ENCODE measurements at regions of chr1 and their contacts with region 1.

Region 1: GRCh38 chr1:160675641-160676410 is 29.0 kb upstream of the SLAMF1 start:
- DNase-seq: peak; percentile 70 to 72
- H3K4me3 ChIP-seq: no peak overlapping the region
- H3K4me3 Mint-ChIP-seq: no peak overlapping the region
- H3K27ac Mint-ChIP-seq: no peak overlapping the region
- H3K4me1 ChIP-seq: no peaks in the 10 kb centered on the region
- H3K4me1 Mint-ChIP-seq: no peaks in the 10 kb centered on the region
- H3K27me3 ChIP-seq: no peaks in the 10 kb centered on the region
- H3K27me3 Mint-ChIP-seq: no peaks in the 10 kb centered on the region
- CTCF ChIP-seq: peak; percentile 68 to 83

Region 2: DNA sequence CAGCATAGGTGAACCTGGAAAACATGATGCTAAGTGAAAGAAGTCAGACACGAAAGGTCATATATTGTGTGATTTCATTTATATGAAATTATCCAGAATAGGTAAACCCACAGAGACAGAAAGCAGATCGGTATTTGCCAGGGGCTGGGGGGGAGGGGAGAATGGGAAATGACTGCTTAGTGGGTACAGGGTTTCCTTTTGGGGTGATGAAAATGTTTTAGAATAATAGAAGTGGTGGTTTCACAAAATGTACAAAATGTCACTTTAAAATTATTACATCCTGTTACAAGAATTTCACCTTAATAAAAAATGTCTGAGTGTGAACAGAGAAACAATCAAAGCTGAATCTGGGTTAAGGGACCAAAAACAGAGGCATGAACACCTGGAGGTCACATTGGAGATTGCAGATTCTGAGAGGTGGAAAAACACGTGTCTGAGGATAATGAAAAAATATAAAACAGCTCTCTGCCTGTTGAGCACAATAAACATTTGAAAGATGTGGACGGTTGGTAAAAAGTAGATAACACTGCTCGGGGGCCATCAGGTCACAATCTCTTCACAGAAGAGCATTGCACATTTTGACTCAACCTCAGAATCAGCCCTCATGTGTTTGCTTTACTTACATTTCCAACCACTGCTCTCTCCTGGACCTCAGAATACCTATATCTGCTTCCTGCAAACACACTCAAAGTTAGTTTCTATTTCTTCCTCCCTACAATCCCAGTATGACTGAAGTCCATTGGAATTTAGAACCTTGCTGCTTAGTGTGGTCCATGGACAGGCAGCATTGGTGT is 156.0 kb before region 1 on chr1:
- CTCF ChIA-PET with region 1: no interaction called
- POLR2A ChIA-PET with region 1: no interaction called
- intact Hi-C with region 1: no loop called
- DNase-seq: no peak
- H3K4me3 ChIP-seq: no peak overlapping the region
- H3K4me3 Mint-ChIP-seq: no peak overlapping the region
- H3K27ac Mint-ChIP-seq: no peak overlapping the region
- H3K4me1 ChIP-seq: no peaks in the 10 kb centered on the region
- H3K4me1 Mint-ChIP-seq: peaks cover 12% of the 10 kb centered on the region
- H3K27me3 ChIP-seq: no peaks in the 10 kb centered on the region
- H3K27me3 Mint-ChIP-seq: peaks cover 4% of the 10 kb centered on the region
- CTCF ChIP-seq: peak in 1 of 2 experiments; percentile 26

Region 3: GRCh38 chr1:160618763-160619274 is 57.0 kb before region 1 on chr1:
- CTCF ChIA-PET with region 1: interaction called, 5 read pairs
- POLR2A ChIA-PET with region 1: no interaction called
- intact Hi-C with region 1: loop called (anchors 5 kb)
- DNase-seq: peak in 1 of 2 experiments; percentile 39
- H3K4me3 ChIP-seq: no peak overlapping the region
- H3K4me3 Mint-ChIP-seq: no peak overlapping the region
- H3K27ac Mint-ChIP-seq: no peak overlapping the region
- H3K4me1 ChIP-seq: no peaks in the 10 kb centered on the region
- H3K4me1 Mint-ChIP-seq: no peaks in the 10 kb centered on the region
- H3K27me3 ChIP-seq: no peaks in the 10 kb centered on the region
- H3K27me3 Mint-ChIP-seq: no peaks in the 10 kb centered on the region
- CTCF ChIP-seq: peak; percentile 49 to 56

Measured in Caco-2 (cell line).